ENCODE measurements at regions of chr18 and their contacts with region 1.

Region 1: DNA sequence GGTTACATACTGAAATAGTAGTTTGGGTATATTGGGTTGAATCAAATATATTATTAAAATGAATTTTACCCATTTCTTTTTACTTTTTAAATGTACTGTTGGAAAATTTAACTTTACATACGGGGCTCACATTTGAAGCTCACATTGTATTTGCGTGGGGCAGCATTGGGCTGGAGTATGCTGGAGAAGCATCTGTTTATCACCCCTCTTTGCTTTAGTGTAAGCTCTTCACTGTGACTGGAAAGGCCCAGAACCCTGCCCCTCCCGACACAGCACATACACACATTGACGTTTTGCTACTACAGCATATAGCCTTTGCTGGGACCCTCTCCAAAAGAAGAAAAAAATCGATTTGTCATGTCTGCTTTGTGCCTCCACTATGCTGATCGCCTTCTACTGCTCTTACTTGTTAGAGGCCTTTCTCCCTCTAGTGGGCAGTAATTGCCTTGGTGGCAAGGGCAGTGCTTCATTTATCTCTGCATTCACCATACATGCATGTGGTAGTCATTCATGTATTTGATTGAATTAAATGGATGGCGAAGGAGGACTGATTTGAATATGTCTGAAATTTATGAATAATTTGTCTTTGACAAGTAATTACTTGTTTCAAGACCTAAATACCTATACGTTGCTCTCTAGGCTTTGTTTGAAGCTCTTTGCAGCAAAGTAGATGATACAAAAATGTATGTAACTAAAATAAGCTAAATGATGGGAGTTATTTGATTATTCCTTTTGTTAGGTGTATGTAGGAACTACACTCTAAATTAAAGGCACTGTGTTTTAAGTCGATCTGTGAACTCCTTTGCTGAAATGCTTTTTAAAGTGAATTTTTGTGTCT is 37.4 kb downstream of the VAPA start:
- DNase-seq: peak; percentile 20 to 79 (median 45)
- ATAC-seq: peak; percentile 66
- H3K4me3 ChIP-seq: no peak overlapping the region
- H3K27ac ChIP-seq: peak overlapping the region; percentile 81
- H3K4me1 ChIP-seq: peaks cover 22 to 54% of the 10 kb centered on the region in 2 experiments; a peak in 4 of 5 replicates
- H3K27me3 ChIP-seq: no peaks in the 10 kb centered on the region
- CTCF ChIP-seq: peak; percentile 68 to 85 (median 80)
- EP300 ChIP-seq: no peak; the same call in 1 of the 2 replicates
- POLR2A ChIP-seq: no peak
- RAD21 ChIP-seq: peak; percentile 55 to 83

Region 2: GRCh38 chr18:9683407-9684396 is 267.5 kb before region 1 on chr18:
- CTCF ChIA-PET with region 1: interaction called, 3 read pairs
- POLR2A ChIA-PET with region 1: no interaction called
- in situ Hi-C with region 1: no loop called
- intact Hi-C with region 1: loop called (anchors 5 kb)
- DNase-seq: peak in 3 of 4 experiments; percentile 51 to 91 (median 63)
- ATAC-seq: peak; percentile 91
- H3K4me3 ChIP-seq: no peak overlapping the region
- H3K27ac ChIP-seq: peak overlapping the region; percentile 81
- H3K4me1 ChIP-seq: peaks cover 10 to 49% of the 10 kb centered on the region in 2 experiments; a peak in 4 of 5 replicates
- H3K27me3 ChIP-seq: no peaks in the 10 kb centered on the region
- CTCF ChIP-seq: peak; percentile 76 to 86 (median 81)
- EP300 ChIP-seq: 0 out of 2 replicates have a peak, but pooled peaks have one; percentile 15
- POLR2A ChIP-seq: no peak
- RAD21 ChIP-seq: peak; percentile 95 to 97

Region 3: DNA sequence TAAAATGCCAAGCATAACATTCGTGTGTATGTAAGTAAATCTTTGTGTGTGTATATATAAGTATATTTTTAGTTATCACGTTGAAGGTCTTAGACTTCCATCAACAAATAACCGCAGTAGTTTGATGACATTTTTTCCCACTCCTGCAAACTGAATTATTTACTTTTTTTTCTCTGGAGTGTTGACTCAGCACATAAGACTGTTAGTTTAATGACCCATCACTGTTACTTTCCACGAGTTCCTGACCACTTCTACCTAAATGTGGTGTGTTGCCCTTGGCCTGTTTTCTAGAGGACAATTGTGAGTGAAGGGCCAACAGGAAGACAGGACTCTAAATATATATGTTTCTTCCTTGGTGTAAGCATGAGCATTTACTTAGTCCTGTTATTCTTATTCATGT is 136.8 kb before region 1 on chr18:
- CTCF ChIA-PET with region 1: interaction called, 3 read pairs
- POLR2A ChIA-PET with region 1: interaction called, 3 read pairs
- in situ Hi-C with region 1: no loop called
- intact Hi-C with region 1: loop called (anchors 5 kb)
- DNase-seq: no peak
- ATAC-seq: no peak
- H3K4me3 ChIP-seq: no peak overlapping the region
- H3K27ac ChIP-seq: peak overlapping the region; percentile 18; the same call in 1 of the 3 replicates
- H3K4me1 ChIP-seq: peaks cover 11 to 34% of the 10 kb centered on the region in 2 experiments; a peak in 4 of 5 replicates
- H3K27me3 ChIP-seq: no peaks in the 10 kb centered on the region
- CTCF ChIP-seq: no peak
- EP300 ChIP-seq: no peak
- POLR2A ChIP-seq: no peak
- RAD21 ChIP-seq: no peak

Region 4: GRCh38 chr18:9876867-9877654 is 74.2 kb before region 1 on chr18:
- CTCF ChIA-PET with region 1: no interaction called
- POLR2A ChIA-PET with region 1: interaction called, 8 read pairs
- in situ Hi-C with region 1: no loop called
- intact Hi-C with region 1: loop called (anchors 1 kb)
- DNase-seq: peak; percentile 80 to 98 (median 88)
- ATAC-seq: peak; percentile 85
- H3K4me3 ChIP-seq: peak overlapping the region; percentile 7; the same call in 1 of the 2 replicates
- H3K27ac ChIP-seq: peak overlapping the region; percentile 97
- H3K4me1 ChIP-seq: peaks cover 23 to 57% of the 10 kb centered on the region in 2 experiments
- H3K27me3 ChIP-seq: no peaks in the 10 kb centered on the region
- CTCF ChIP-seq: peak in 1 of 3 experiments; percentile 15; a peak in 2 of 6 replicates
- EP300 ChIP-seq: peak; percentile 96
- POLR2A ChIP-seq: peak; percentile 71; the same call in 1 of the 2 replicates
- RAD21 ChIP-seq: peak; percentile 34 to 38

Measured in K562 (cell line).